ENCODE measurements at regions of chr10 and their contacts with region 1.

Region 1: GRCh38 chr10:88157981-88158465 is 294.6 kb downstream of the PTEN start:
- DNase-seq: no peak
- ATAC-seq: peak in 6 of 8 donors; percentile 55 to 76 (median 62)
- H3K4me3 ChIP-seq: no peak overlapping the region
- H3K27ac ChIP-seq: peak overlapping the region; percentile 21 to 73 (median 58)
- H3K4me1 ChIP-seq: peaks cover 0 to 29% (median 5%) of the 10 kb centered on the region in 9 donors
- H3K27me3 ChIP-seq: no peaks in the 10 kb centered on the region
- CTCF ChIP-seq: no peak

Region 2: GRCh38 chr10:88042160-88043100 is 115.6 kb before region 1 on chr10:
- intact Hi-C with region 1: loop called in 1 of 10 experiments (anchors 5 kb)
- DNase-seq: peak in 1 of 2 donors; percentile 17
- ATAC-seq: peak in 5 of 8 donors; percentile 38 to 71 (median 65)
- H3K4me3 ChIP-seq: no peak overlapping the region
- H3K27ac ChIP-seq: peak overlapping the region in 6 of 10 donors; percentile 26 to 65 (median 44)
- H3K4me1 ChIP-seq: peaks cover 3 to 71% (median 18%) of the 10 kb centered on the region in 9 donors
- H3K27me3 ChIP-seq: no peaks in the 10 kb centered on the region
- CTCF ChIP-seq: no peak